PC-9 (cell line): ENCODE measurements at regions of chr5 and their contacts with region 1.

Region 1: GRCh38 chr5:151164686-151165392 is 7.3 kb upstream of the ANXA6 start:
- DNase-seq: peak; percentile 59 to 81
- H3K4me3 ChIP-seq: no peak overlapping the region
- H3K27ac ChIP-seq: no peak overlapping the region
- H3K4me1 ChIP-seq: no peaks in the 10 kb centered on the region
- H3K27me3 ChIP-seq: peaks cover 6% of the 10 kb centered on the region; the same call in 1 of the 2 replicates
- CTCF ChIP-seq: peak; percentile 90

Region 2: GRCh38 chr5:150624334-150625163 is 540.3 kb before region 1 on chr5:
- CTCF ChIA-PET with region 1: interaction called, 12 read pairs
- POLR2A ChIA-PET with region 1: no interaction called
- intact Hi-C with region 1: no loop called
- DNase-seq: no peak
- H3K4me3 ChIP-seq: peak overlapping the region; percentile 45; the same call in 1 of the 2 replicates
- H3K27ac ChIP-seq: no peak overlapping the region
- H3K4me1 ChIP-seq: no peaks in the 10 kb centered on the region; the same call in 1 of the 2 replicates
- H3K27me3 ChIP-seq: peaks cover 41% of the 10 kb centered on the region
- CTCF ChIP-seq: no peak

Region 3: DNA sequence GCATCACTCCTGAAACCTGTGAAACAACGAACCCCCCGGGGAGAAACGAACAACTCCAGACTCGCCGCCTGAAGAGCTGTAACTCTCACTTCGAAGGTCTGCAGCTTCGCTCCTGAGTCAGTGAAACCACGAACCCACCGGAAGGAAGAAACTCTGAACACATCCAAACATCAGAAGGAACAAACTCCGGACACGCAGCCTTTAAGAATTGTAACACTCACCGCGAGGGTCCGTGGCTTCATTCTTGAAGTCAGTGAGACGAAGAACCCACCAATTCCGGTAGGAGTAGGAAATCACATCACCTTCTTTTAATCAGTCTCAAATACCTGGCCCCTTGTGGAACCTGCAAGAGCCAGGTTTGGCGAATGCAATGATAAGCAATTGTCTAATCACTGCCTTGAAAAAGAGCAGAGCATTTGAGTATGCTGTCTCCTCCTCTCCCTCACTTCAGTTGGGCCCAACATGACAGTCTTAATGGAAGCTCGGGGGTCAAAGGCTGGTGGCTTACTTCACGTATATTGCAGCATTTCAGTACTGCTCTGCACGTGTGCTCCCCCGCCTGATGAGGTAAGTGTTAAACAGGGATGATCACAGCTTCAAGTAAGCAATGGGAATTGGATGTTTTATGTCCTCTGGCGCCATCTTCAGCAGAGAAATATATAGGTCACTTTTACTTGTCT is 318.0 kb before region 1 on chr5:
- CTCF ChIA-PET with region 1: no interaction called
- POLR2A ChIA-PET with region 1: no interaction called
- intact Hi-C with region 1: loop called (anchors 2 kb)
- DNase-seq: peak; percentile 38 to 63
- H3K4me3 ChIP-seq: no peak overlapping the region
- H3K27ac ChIP-seq: no peak overlapping the region
- H3K4me1 ChIP-seq: no peaks in the 10 kb centered on the region
- H3K27me3 ChIP-seq: peaks cover 2% of the 10 kb centered on the region; the same call in 1 of the 2 replicates
- CTCF ChIP-seq: peak; percentile 79

Region 4: DNA sequence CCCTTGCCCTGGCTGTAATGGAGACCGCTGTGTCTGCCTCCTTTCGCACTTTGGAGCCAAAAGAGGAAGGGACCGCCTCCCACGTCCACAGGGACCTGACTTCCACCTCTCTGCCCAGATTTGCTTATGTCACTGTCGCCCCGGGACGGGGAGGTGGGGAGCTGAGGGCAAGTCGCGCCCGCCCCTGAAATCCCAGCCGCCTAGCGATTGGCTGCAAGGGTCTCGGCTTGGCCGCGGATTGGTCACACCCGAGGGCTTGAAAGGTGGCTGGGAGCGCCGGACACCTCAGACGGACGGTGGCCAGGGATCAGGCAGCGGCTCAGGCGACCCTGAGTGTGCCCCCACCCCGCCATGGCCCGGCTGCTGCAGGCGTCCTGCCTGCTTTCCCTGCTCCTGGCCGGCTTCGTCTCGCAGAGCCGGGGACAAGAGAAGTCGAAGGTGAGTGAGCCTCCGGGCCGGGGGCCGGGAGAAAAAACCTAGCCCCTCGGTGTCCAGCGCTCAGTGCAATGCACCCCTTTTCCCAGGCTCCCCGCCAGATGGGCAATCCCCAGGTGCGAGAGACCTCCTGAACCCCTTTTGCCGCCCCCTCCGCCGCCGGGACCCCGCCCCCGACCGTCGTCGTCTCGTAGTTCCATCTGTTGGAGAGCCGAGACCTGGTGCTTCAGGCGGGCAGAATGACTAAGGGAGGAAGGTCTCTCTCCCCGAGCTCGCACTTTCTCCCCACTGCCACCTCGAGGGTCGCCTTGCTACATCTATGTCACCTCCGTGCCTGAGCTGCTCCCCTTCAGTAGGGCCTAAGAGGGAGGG is 144.3 kb before region 1 on chr5 and contains the start of gene GPX3:
- CTCF ChIA-PET with region 1: no interaction called
- POLR2A ChIA-PET with region 1: no interaction called
- intact Hi-C with region 1: no loop called
- DNase-seq: peak; percentile 78 to 93
- H3K4me3 ChIP-seq: peak within 1 kb of the TSS; percentile 94
- H3K27ac ChIP-seq: no peak within 1 kb of the TSS
- H3K4me1 ChIP-seq: peaks cover 12% of the 10 kb centered on the region
- H3K27me3 ChIP-seq: no peaks in the 10 kb centered on the region
- CTCF ChIP-seq: no peak
- total RNA-seq, gene GPX3: 84.6 and 93.2 TPM in 2 replicates

Region 5: GRCh38 chr5:151051066-151051930 is 113.5 kb before region 1 on chr5:
- CTCF ChIA-PET with region 1: interaction called, 8 read pairs
- POLR2A ChIA-PET with region 1: no interaction called
- intact Hi-C with region 1: loop called (anchors 1 kb)
- DNase-seq: peak; percentile 59 to 65
- H3K4me3 ChIP-seq: no peak overlapping the region
- H3K27ac ChIP-seq: no peak overlapping the region
- H3K4me1 ChIP-seq: peaks cover 25% of the 10 kb centered on the region
- H3K27me3 ChIP-seq: no peaks in the 10 kb centered on the region
- CTCF ChIP-seq: peak; percentile 92

Region 6: GRCh38 chr5:151239237-151239861 is 74.5 kb after region 1 on chr5:
- CTCF ChIA-PET with region 1: no interaction called
- POLR2A ChIA-PET with region 1: no interaction called
- intact Hi-C with region 1: loop called (anchors 2 kb)
- DNase-seq: peak in 1 of 2 experiments; percentile 63
- H3K4me3 ChIP-seq: no peak overlapping the region
- H3K27ac ChIP-seq: no peak overlapping the region
- H3K4me1 ChIP-seq: peaks cover 8% of the 10 kb centered on the region
- H3K27me3 ChIP-seq: 0 out of 2 replicates have a peak, but pooled peaks cover 4% of the 10 kb centered on the region
- CTCF ChIP-seq: peak; percentile 88

Region 7: GRCh38 chr5:151751091-151751490 is 586.3 kb after region 1 on chr5:
- CTCF ChIA-PET with region 1: no interaction called
- POLR2A ChIA-PET with region 1: no interaction called
- intact Hi-C with region 1: no loop called
- DNase-seq: no peak
- H3K4me3 ChIP-seq: no peak overlapping the region
- H3K27ac ChIP-seq: no peak overlapping the region
- H3K4me1 ChIP-seq: peaks cover 9% of the 10 kb centered on the region
- H3K27me3 ChIP-seq: no peaks in the 10 kb centered on the region
- CTCF ChIP-seq: no peak